Activated CD4-positive, alpha-beta memory T cell treated with anti-CD3 and anti-CD28 coated beads, Interleukin-2, amount 10 ng/mL, durations not matched to agents 7 days and 5 days (primary cell): ENCODE measurements at regions of chr5 and their contacts with region 1.

Region 1: DNA sequence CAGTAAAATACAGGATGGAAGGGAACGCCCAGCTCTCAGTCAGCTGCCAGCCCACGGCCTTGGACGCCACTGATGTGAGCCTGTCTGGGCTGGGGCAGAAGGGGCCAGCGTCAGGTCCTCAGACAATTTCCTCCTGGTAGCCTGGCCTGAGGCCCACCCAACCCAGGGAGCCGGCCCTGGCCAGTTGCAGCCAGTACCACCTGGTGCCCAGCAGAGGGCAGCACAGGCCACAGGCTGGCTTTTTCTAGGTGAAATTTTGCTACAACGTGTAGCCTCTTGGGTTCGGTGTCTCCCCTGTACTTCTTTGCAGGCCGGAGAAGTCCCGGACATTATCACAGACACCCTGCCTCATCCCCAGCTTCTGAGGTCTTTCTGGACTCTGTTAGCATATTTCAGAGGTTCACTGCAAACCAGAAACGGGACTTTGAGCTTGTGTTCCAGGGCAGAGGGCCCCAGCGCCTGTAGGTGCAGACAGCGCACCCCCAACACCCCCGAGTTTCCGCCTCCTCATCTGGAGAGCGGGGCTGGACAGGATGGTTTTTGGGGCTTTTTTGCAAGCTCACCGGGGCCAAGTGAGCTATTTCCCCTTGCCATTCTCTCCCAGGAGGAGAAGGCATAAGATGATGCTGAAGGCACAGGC is 45.9 kb upstream of the KCNMB1 start:
- DNase-seq: peak; percentile 57
- H3K4me3 Mint-ChIP-seq: no peak overlapping the region
- H3K27ac Mint-ChIP-seq: no peak overlapping the region
- H3K4me1 Mint-ChIP-seq: no peaks in the 10 kb centered on the region
- H3K27me3 Mint-ChIP-seq: peaks cover 11% of the 10 kb centered on the region

Region 2: DNA sequence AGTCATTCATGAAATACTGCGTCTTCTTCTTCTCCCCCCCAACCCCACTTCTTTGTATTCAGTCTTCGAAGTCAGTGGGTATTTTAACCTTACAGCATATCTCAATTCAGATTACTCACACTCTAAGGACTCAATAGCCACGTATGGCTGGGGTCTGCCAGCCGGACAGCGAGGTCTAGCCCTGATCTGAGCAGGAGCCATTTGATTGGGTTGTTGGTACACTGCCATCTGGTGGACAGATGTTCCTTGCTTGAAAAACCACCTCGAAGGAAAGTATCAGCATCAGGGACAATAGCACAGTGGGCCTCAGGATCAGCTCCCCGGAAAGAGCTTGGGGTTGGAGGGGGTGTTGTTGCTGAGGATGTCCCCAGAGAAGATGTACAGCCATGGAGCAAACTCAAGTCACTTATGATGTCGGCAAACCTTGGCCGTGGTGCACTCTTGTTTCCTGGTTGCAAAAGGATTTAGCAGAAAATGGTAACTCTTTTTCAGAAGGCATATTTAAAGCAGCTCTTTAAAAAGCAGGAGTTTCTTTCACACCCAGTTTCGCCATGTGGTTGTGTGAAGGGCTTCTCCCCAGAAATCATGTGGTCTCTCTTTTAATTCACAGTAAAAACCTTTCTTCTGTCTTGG is 14.2 kb before region 1 on chr5:
- CTCF ChIA-PET with region 1: interaction called, 19 read pairs
- POLR2A ChIA-PET with region 1: no interaction called
- DNase-seq: peak; percentile 51
- H3K4me3 Mint-ChIP-seq: no peak overlapping the region
- H3K27ac Mint-ChIP-seq: no peak overlapping the region
- H3K4me1 Mint-ChIP-seq: peaks cover 12% of the 10 kb centered on the region
- H3K27me3 Mint-ChIP-seq: peaks cover 20% of the 10 kb centered on the region

Region 3: GRCh38 chr5:170623576-170624181 is 188.6 kb after region 1 on chr5:
- CTCF ChIA-PET with region 1: interaction called, 22 read pairs
- POLR2A ChIA-PET with region 1: no interaction called
- DNase-seq: peak; percentile 34
- H3K4me3 Mint-ChIP-seq: no peak overlapping the region
- H3K27ac Mint-ChIP-seq: no peak overlapping the region
- H3K4me1 Mint-ChIP-seq: peaks cover 6% of the 10 kb centered on the region
- H3K27me3 Mint-ChIP-seq: peaks cover 4% of the 10 kb centered on the region

Region 4: DNA sequence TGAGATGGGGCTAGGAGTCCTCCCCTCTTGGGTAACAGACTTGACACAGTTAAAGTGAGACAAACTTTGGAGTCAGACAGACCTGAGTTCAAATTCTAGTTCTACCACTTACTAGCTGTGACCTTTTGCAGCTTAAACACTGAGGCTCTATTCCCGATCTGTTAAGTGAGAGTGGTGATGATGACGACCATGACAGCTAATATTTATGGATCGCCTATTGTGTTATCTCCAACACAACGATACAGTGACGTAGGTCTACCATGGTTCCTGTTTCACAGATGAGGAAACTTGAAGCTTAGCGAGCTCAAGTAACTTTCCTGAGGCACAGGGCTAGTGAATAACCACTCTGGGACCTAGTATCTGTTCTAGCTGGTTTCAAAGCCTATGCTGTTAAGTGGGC is 238.1 kb after region 1 on chr5:
- CTCF ChIA-PET with region 1: no interaction called
- POLR2A ChIA-PET with region 1: no interaction called
- DNase-seq: no peak
- H3K4me3 Mint-ChIP-seq: no peak overlapping the region
- H3K27ac Mint-ChIP-seq: no peak overlapping the region
- H3K4me1 Mint-ChIP-seq: no peaks in the 10 kb centered on the region
- H3K27me3 Mint-ChIP-seq: peaks cover 12% of the 10 kb centered on the region